CD14-positive monocyte (primary cell): ENCODE measurements at regions of chr1 and their contacts with region 1.

Region 1: GRCh38 chr1:71080739-71081696 is at the start of gene ZRANB2:
- DNase-seq: peak; percentile 85 to 97 (median 93)
- H3K4me3 ChIP-seq: peak within 1 kb of the TSS; percentile 88 to 98 (median 97)
- H3K4me3 Mint-ChIP-seq: peak within 1 kb of the TSS; percentile 94 to 98
- H3K27ac ChIP-seq: peak within 1 kb of the TSS; percentile 81 to 98
- H3K27ac Mint-ChIP-seq: peak within 1 kb of the TSS; percentile 97 to 99 (median 99)
- H3K4me1 ChIP-seq: peaks cover 7 to 20% of the 10 kb centered on the region in 2 donors
- H3K4me1 Mint-ChIP-seq: peaks cover 16% of the 10 kb centered on the region
- H3K27me3 ChIP-seq: peaks cover 0 to 3% of the 10 kb centered on the region in 2 donors
- H3K27me3 Mint-ChIP-seq: peaks cover 2 to 9% (median 7%) of the 10 kb centered on the region in 3 donors
- CTCF ChIP-seq: peak; percentile 70
- polyA plus RNA-seq, gene ZRANB2: 21.3 to 42.1 (median 22.9) TPM

Region 2: GRCh38 chr1:70205434-70206118 is 875.4 kb before region 1 on chr1 and contains the start of gene LRRC40:
- intact Hi-C with region 1: loop called (anchors 5 to 10 kb)
- DNase-seq: peak; percentile 89 to 95 (median 94)
- H3K4me3 ChIP-seq: peak within 1 kb of the TSS; percentile 87 to 100 (median 92)
- H3K4me3 Mint-ChIP-seq: peak within 1 kb of the TSS; percentile 96 to 99
- H3K27ac ChIP-seq: peak within 1 kb of the TSS; percentile 85 to 95
- H3K27ac Mint-ChIP-seq: peak within 1 kb of the TSS; percentile 99 to 100 (median 99)
- H3K4me1 ChIP-seq: peaks cover 15 to 34% of the 10 kb centered on the region in 2 donors
- H3K4me1 Mint-ChIP-seq: peaks cover 45% of the 10 kb centered on the region
- H3K27me3 ChIP-seq: no peaks in the 10 kb centered on the region
- H3K27me3 Mint-ChIP-seq: peaks cover 0 to 3% (median 0%) of the 10 kb centered on the region in 3 donors
- CTCF ChIP-seq: no peak
- polyA plus RNA-seq, gene LRRC40: 4.3 to 6.3 (median 5.0) TPM

Region 3: GRCh38 chr1:71170925-71171324 is 89.9 kb after region 1 on chr1:
- intact Hi-C with region 1: no loop called
- DNase-seq: no peak
- H3K4me3 ChIP-seq: no peak overlapping the region
- H3K4me3 Mint-ChIP-seq: no peak overlapping the region
- H3K27ac ChIP-seq: no peak overlapping the region
- H3K27ac Mint-ChIP-seq: no peak overlapping the region
- H3K4me1 ChIP-seq: no peaks in the 10 kb centered on the region
- H3K4me1 Mint-ChIP-seq: no peaks in the 10 kb centered on the region
- H3K27me3 ChIP-seq: no peaks in the 10 kb centered on the region
- H3K27me3 Mint-ChIP-seq: no peaks in the 10 kb centered on the region
- CTCF ChIP-seq: no peak